CD14-positive monocyte (primary cell): ENCODE measurements at regions of chr7 and their contacts with region 1.

Region 1: GRCh38 chr7:128221929-128222403 is 19.1 kb upstream of the LEP start:
- DNase-seq: peak; percentile 65 to 77 (median 70)
- H3K4me3 ChIP-seq: peak overlapping the region in 1 of 3 experiments; percentile 0
- H3K4me3 Mint-ChIP-seq: peak overlapping the region in 1 of 2 donors; percentile 11
- H3K27ac ChIP-seq: peak overlapping the region; percentile 55 to 80
- H3K27ac Mint-ChIP-seq: peak overlapping the region; percentile 80 to 93 (median 86)
- H3K4me1 ChIP-seq: peaks cover 61 to 65% of the 10 kb centered on the region in 2 donors
- H3K4me1 Mint-ChIP-seq: peaks cover 65% of the 10 kb centered on the region
- H3K27me3 ChIP-seq: no peaks in the 10 kb centered on the region
- H3K27me3 Mint-ChIP-seq: peaks cover 0 to 4% (median 2%) of the 10 kb centered on the region in 3 donors
- CTCF ChIP-seq: no peak

Region 2: DNA sequence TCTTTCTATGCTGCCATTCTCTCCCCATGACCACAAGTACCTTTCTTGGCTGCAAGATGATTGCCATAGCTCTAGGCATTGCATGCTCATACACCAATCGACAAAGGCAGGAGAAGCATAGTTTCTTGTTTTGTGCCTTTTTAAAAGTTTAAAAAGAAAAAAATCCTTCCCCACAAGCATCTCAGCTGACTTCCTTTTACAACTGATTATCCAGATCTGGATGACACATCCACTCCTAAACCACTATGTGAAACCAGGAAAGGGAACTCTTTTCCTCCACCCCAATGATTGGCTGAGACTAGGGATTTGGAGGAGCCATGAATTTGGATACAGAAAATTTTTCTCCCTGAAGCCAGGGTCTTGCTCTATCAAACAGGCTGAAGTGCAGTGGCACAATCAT is 176.2 kb before region 1 on chr7:
- intact Hi-C with region 1: no loop called
- DNase-seq: no peak
- H3K4me3 ChIP-seq: no peak overlapping the region
- H3K4me3 Mint-ChIP-seq: no peak overlapping the region
- H3K27ac ChIP-seq: no peak overlapping the region
- H3K27ac Mint-ChIP-seq: no peak overlapping the region
- H3K4me1 ChIP-seq: peaks cover 12 to 20% of the 10 kb centered on the region in 2 donors
- H3K4me1 Mint-ChIP-seq: peaks cover 19% of the 10 kb centered on the region
- H3K27me3 ChIP-seq: no peaks in the 10 kb centered on the region
- H3K27me3 Mint-ChIP-seq: no peaks in the 10 kb centered on the region
- CTCF ChIP-seq: no peak

Region 3: GRCh38 chr7:128236924-128237586 is 15.1 kb after region 1 on chr7:
- intact Hi-C with region 1: loop called in 1 of 2 experiments (anchors 1 kb)
- DNase-seq: peak; percentile 95 to 98 (median 98)
- H3K4me3 ChIP-seq: no peak overlapping the region
- H3K4me3 Mint-ChIP-seq: peak overlapping the region; percentile 10 to 29
- H3K27ac ChIP-seq: peak overlapping the region; percentile 77 to 94
- H3K27ac Mint-ChIP-seq: peak overlapping the region; percentile 96 to 99 (median 98)
- H3K4me1 ChIP-seq: peaks cover 39 to 49% of the 10 kb centered on the region in 2 donors
- H3K4me1 Mint-ChIP-seq: peaks cover 42% of the 10 kb centered on the region
- H3K27me3 ChIP-seq: peaks cover 0 to 7% of the 10 kb centered on the region in 2 donors
- H3K27me3 Mint-ChIP-seq: peaks cover 0 to 6% (median 0%) of the 10 kb centered on the region in 3 donors
- CTCF ChIP-seq: no peak

Region 4: GRCh38 chr7:128259131-128259800 is 37.3 kb after region 1 on chr7:
- intact Hi-C with region 1: no loop called
- DNase-seq: no peak
- H3K4me3 ChIP-seq: no peak overlapping the region
- H3K4me3 Mint-ChIP-seq: no peak overlapping the region
- H3K27ac ChIP-seq: no peak overlapping the region
- H3K27ac Mint-ChIP-seq: no peak overlapping the region
- H3K4me1 ChIP-seq: peaks cover 8 to 9% of the 10 kb centered on the region in 2 donors
- H3K4me1 Mint-ChIP-seq: peaks cover 11% of the 10 kb centered on the region
- H3K27me3 ChIP-seq: no peaks in the 10 kb centered on the region
- H3K27me3 Mint-ChIP-seq: peaks cover 3 to 4% (median 3%) of the 10 kb centered on the region in 3 donors
- CTCF ChIP-seq: no peak